HCT116 (cell line): ENCODE measurements at regions of chr3 and their contacts with region 1.

Region 1: GRCh38 chr3:9932843-9933560 is 632 bp upstream of the CRELD1 start:
- DNase-seq: peak; percentile 43
- ATAC-seq: peak; percentile 74
- H3K4me3 ChIP-seq: peak overlapping the region; percentile 52 to 69
- H3K27ac ChIP-seq: peak overlapping the region; percentile 84
- H3K4me1 ChIP-seq: peaks cover 9 to 24% of the 10 kb centered on the region in 2 experiments
- H3K27me3 ChIP-seq: no peaks in the 10 kb centered on the region
- CTCF ChIP-seq: peak; percentile 64 to 76 (median 71)
- POLR2A ChIP-seq: no peak
- RAD21 ChIP-seq: peak; percentile 59

Region 2: DNA sequence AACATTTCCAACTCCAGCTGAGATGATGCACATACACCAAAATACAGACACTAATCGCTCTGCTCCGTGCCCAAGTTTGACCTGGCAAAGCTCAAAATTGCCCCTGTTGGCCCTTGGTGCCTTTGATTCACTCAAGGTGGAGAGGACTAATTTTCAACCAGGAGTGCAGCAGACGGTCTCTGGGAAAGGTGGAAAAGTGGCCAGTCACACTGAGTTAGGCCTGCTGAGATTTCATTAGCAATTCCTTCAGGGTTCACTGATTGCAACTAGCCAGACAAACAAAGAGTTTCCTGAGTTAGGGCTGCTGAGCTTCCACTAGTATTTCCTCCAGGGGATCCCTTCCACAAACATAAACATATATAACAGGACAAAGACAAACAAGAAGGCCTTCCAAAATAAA is 350.7 kb before region 1 on chr3:
- CTCF ChIA-PET with region 1: no interaction called
- POLR2A ChIA-PET with region 1: no interaction called
- RAD21 ChIA-PET with region 1: no interaction called
- intact Hi-C with region 1: no loop called
- DNase-seq: no peak
- ATAC-seq: no peak
- H3K4me3 ChIP-seq: no peak overlapping the region
- H3K27ac ChIP-seq: no peak overlapping the region
- H3K4me1 ChIP-seq: no peaks in the 10 kb centered on the region
- H3K27me3 ChIP-seq: no peaks in the 10 kb centered on the region
- CTCF ChIP-seq: no peak
- POLR2A ChIP-seq: no peak
- RAD21 ChIP-seq: no peak

Region 3: DNA sequence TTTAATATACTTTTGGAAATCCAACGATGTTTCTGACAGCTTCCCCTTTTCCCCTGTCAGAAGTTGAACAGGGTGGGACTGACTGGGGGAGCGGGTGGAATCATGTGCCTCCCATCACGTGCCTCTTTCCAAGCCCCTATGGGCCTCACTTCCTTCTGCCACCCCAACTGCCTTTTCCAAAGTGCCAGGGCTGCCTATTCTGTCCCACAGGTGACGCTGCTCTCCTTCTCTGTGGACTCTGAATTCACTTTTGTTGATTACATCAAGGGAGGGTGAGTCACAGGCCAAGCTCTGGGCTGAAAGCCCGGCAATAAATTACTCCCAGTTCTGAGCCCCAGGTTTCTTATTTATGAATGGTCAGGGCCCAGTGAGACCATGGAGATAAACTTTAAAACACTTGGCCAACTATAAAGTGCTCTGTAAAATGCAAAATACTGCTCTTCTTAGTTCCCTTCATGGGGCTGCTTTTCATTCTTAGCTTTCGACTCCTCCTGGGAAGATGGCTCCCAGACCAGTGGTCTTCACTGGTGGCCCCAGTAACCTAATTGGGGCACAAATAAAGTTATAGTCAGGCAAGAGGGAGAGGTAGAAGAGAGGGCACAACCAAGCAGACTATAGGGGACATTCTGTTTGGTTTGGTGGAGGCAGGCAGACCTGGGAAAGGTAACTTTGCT is 217.1 kb before region 1 on chr3:
- CTCF ChIA-PET with region 1: interaction called, 4 read pairs
- POLR2A ChIA-PET with region 1: no interaction called
- RAD21 ChIA-PET with region 1: no interaction called
- intact Hi-C with region 1: loop called (anchors 5 kb)
- DNase-seq: peak; percentile 81
- ATAC-seq: peak; percentile 98
- H3K4me3 ChIP-seq: no peak overlapping the region
- H3K27ac ChIP-seq: peak overlapping the region; percentile 9; the same call in 1 of the 2 replicates
- H3K4me1 ChIP-seq: peaks cover 10 to 14% of the 10 kb centered on the region in 2 experiments
- H3K27me3 ChIP-seq: peaks cover 3% of the 10 kb centered on the region; the same call in 1 of the 2 replicates
- CTCF ChIP-seq: peak; percentile 89 to 94 (median 94)
- POLR2A ChIP-seq: no peak
- RAD21 ChIP-seq: peak; percentile 99

Region 4: GRCh38 chr3:9843715-9844438 is 89.1 kb before region 1 on chr3 and contains the start of gene RPUSD3:
- CTCF ChIA-PET with region 1: interaction called, 8 read pairs
- POLR2A ChIA-PET with region 1: no interaction called
- RAD21 ChIA-PET with region 1: no interaction called
- intact Hi-C with region 1: loop called (anchors 5 kb)
- DNase-seq: peak; percentile 85
- ATAC-seq: peak; percentile 97
- H3K4me3 ChIP-seq: peak within 1 kb of the TSS; percentile 66 to 84
- H3K27ac ChIP-seq: peak within 1 kb of the TSS; percentile 79
- H3K4me1 ChIP-seq: peaks cover 0 to 15% of the 10 kb centered on the region in 2 experiments; a peak in 1 of 4 replicates
- H3K27me3 ChIP-seq: no peaks in the 10 kb centered on the region
- CTCF ChIP-seq: no peak
- POLR2A ChIP-seq: peak; percentile 65
- RAD21 ChIP-seq: no peak
- total RNA-seq, gene RPUSD3: 58.0 TPM

Region 5: DNA sequence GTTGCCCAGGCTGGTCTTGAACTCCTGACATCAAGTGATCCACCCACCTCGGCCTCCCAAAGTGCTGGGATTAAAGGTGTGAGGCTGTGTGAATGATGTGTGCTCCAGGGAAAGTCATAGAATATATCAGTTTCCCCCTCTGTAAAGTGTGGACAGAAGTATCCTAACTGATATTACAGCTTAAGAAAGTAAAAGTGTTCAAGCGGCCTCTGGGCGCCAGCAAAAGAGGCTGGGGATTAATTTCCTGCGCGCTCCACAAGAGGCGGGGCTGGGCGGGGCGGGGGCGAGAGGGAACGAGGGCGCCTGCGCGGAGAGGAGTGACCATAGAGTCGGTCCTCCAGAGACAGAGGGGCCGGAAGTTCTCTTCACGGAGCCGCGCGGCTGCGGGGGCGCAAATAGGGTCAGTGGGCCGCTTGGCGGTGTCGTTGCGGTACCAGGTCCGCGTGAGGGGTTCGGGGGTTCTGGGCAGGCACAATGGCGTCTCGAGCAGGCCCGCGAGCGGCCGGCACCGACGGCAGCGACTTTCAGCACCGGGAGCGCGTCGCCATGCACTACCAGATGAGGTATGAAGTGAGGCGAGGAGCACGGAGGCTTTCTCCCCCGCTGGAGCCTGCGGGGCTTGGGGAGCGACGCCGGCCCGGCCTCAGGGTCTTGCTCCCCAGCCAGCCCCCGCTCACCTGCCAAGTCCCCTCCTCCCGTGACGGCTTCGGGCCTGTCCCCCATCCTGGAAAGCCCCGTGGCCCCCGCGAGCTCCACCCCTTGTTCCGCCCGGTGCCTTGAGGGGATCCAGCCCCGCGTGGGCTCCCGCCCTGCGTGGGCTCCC is 42.5 kb before region 1 on chr3 and contains the start of gene JAGN1:
- CTCF ChIA-PET with region 1: no interaction called
- POLR2A ChIA-PET with region 1: no interaction called
- RAD21 ChIA-PET with region 1: no interaction called
- intact Hi-C with region 1: loop called (anchors 5 kb)
- DNase-seq: peak; percentile 75
- ATAC-seq: peak; percentile 86
- H3K4me3 ChIP-seq: peak within 1 kb of the TSS; percentile 95 to 99
- H3K27ac ChIP-seq: peak within 1 kb of the TSS; percentile 92
- H3K4me1 ChIP-seq: peaks cover 4 to 28% of the 10 kb centered on the region in 2 experiments; a peak in 3 of 4 replicates
- H3K27me3 ChIP-seq: no peaks in the 10 kb centered on the region
- CTCF ChIP-seq: no peak
- POLR2A ChIP-seq: peak; percentile 75
- RAD21 ChIP-seq: no peak
- total RNA-seq, gene JAGN1: 33.4 TPM

Region 6: DNA sequence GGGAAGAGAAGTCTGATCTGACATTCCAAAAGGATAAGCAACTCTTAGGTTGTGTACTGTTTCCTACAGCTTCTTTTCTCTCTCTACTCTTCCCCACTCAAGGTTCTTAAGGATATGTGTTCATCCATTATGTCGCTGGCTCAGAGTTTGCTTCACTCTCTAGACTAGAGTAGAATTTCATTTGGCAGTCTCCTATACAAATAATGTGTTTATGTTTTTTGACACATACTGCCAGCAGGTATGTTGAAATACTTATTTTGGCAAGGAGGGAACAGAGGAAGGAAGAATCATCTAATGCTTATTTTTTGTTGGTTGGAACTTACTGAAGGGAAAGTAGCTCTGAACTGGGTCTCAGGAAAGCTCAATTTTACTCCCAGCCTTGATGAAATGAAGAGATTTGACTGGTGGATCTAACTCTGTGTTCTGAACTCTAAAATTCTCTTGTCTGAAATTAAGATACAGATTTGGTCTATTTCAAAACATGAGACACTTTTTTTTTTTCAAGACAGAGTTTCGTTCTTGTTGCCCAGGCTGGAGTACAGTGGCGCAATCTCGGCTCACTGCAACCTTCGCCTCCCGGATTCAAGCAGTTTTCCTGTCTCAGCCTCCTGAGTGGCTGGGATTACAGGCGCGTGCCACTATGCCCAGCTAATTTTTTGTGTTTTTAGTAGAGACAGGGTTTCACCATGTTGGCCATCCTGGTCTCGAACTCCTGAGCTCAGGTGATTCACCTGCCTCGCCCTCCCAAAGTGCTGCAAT is 61.3 kb after region 1 on chr3:
- CTCF ChIA-PET with region 1: no interaction called
- POLR2A ChIA-PET with region 1: no interaction called
- RAD21 ChIA-PET with region 1: no interaction called
- intact Hi-C with region 1: no loop called
- DNase-seq: no peak
- ATAC-seq: no peak
- H3K4me3 ChIP-seq: no peak overlapping the region
- H3K27ac ChIP-seq: no peak overlapping the region
- H3K4me1 ChIP-seq: no peaks in the 10 kb centered on the region
- H3K27me3 ChIP-seq: no peaks in the 10 kb centered on the region
- CTCF ChIP-seq: no peak
- POLR2A ChIP-seq: no peak
- RAD21 ChIP-seq: no peak

Region 7: GRCh38 chr3:10273702-10274305 is 340.8 kb after region 1 on chr3:
- CTCF ChIA-PET with region 1: no interaction called
- POLR2A ChIA-PET with region 1: no interaction called
- RAD21 ChIA-PET with region 1: no interaction called
- intact Hi-C with region 1: no loop called
- DNase-seq: no peak
- ATAC-seq: no peak
- H3K4me3 ChIP-seq: no peak overlapping the region
- H3K27ac ChIP-seq: no peak overlapping the region
- H3K4me1 ChIP-seq: no peaks in the 10 kb centered on the region
- H3K27me3 ChIP-seq: no peaks in the 10 kb centered on the region
- CTCF ChIP-seq: no peak
- POLR2A ChIP-seq: no peak
- RAD21 ChIP-seq: no peak